Caco-2 (cell line): ENCODE measurements at regions of chr6 and their contacts with region 1.

Region 1: GRCh38 chr6:118283766-118284165 is 264.3 kb upstream of the PLN start:
- DNase-seq: peak; percentile 33 to 39
- H3K4me3 ChIP-seq: no peak overlapping the region
- H3K4me3 Mint-ChIP-seq: no peak overlapping the region
- H3K27ac Mint-ChIP-seq: no peak overlapping the region
- H3K4me1 ChIP-seq: peaks cover 6% of the 10 kb centered on the region; the same call in 1 of the 2 replicates
- H3K4me1 Mint-ChIP-seq: peaks cover 9% of the 10 kb centered on the region
- H3K27me3 ChIP-seq: no peaks in the 10 kb centered on the region
- H3K27me3 Mint-ChIP-seq: peaks cover 6% of the 10 kb centered on the region
- CTCF ChIP-seq: peak; percentile 40 to 63

Region 2: GRCh38 chr6:118509009-118509617 is 225.3 kb after region 1 on chr6:
- CTCF ChIA-PET with region 1: no interaction called
- POLR2A ChIA-PET with region 1: no interaction called
- intact Hi-C with region 1: loop called (anchors 1 kb)
- DNase-seq: peak in 1 of 2 experiments; percentile 10
- H3K4me3 ChIP-seq: no peak overlapping the region
- H3K4me3 Mint-ChIP-seq: no peak overlapping the region
- H3K27ac Mint-ChIP-seq: no peak overlapping the region
- H3K4me1 ChIP-seq: no peaks in the 10 kb centered on the region
- H3K4me1 Mint-ChIP-seq: no peaks in the 10 kb centered on the region
- H3K27me3 ChIP-seq: no peaks in the 10 kb centered on the region
- H3K27me3 Mint-ChIP-seq: no peaks in the 10 kb centered on the region
- CTCF ChIP-seq: peak; percentile 45 to 71

Region 3: DNA sequence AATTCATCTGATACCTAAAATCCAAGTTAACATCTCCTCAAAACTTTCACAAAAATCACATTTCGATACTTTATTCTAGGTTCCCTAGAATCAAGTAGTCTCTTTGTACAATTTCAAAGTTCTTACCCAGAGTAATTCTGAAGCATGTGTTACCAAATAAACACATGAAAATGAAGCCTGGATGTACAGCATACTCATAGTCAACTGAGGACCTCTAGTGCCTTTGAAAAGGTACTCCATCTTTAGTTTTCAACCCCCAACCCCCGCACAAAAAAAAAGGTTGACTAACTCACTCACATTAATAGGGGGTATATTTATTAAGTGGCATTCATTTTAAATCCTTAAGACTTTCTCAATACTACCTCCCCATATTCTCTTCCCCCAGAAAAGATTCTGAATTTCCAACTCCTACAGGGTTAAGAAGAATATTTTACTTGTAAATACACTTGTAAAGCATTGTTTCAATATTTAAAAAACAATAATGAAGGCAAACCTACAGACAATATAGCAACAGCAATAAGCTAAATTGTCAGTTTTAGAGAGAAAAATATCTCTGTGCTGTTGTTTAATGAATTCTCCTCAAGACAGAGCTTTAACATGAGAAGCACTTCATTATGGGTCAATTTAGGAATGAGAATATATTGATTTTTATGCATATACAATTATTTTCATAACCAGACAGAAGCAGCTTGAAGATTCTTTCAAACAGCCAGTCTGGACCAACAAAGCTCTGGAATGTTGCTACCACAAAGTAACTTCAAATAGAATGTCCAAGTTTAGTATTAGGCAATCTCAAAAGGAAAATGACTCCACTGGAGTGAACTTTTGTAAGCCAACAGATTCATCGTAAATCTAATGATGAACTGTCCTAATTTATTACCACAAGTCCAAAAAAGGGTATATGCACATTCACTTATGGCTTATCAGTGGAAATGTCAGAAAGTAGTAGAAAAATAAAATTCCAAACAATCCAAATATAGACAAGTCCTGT is 267.6 kb after region 1 on chr6:
- CTCF ChIA-PET with region 1: interaction called, 3 read pairs
- POLR2A ChIA-PET with region 1: no interaction called
- intact Hi-C with region 1: loop called (anchors 1 kb)
- DNase-seq: peak in 1 of 2 experiments; percentile 12
- H3K4me3 ChIP-seq: no peak overlapping the region
- H3K4me3 Mint-ChIP-seq: no peak overlapping the region
- H3K27ac Mint-ChIP-seq: no peak overlapping the region
- H3K4me1 ChIP-seq: no peaks in the 10 kb centered on the region
- H3K4me1 Mint-ChIP-seq: no peaks in the 10 kb centered on the region
- H3K27me3 ChIP-seq: no peaks in the 10 kb centered on the region
- H3K27me3 Mint-ChIP-seq: peaks cover 3% of the 10 kb centered on the region
- CTCF ChIP-seq: peak; percentile 35 to 59

Region 4: GRCh38 chr6:118618679-118619377 is 335.1 kb after region 1 on chr6:
- CTCF ChIA-PET with region 1: no interaction called
- POLR2A ChIA-PET with region 1: no interaction called
- intact Hi-C with region 1: loop called (anchors 2 kb)
- DNase-seq: peak; percentile 36 to 52
- H3K4me3 ChIP-seq: no peak overlapping the region
- H3K4me3 Mint-ChIP-seq: no peak overlapping the region
- H3K27ac Mint-ChIP-seq: no peak overlapping the region
- H3K4me1 ChIP-seq: no peaks in the 10 kb centered on the region
- H3K4me1 Mint-ChIP-seq: no peaks in the 10 kb centered on the region
- H3K27me3 ChIP-seq: no peaks in the 10 kb centered on the region
- H3K27me3 Mint-ChIP-seq: no peaks in the 10 kb centered on the region
- CTCF ChIP-seq: peak; percentile 75 to 80